IMR-90 (cell line): ENCODE measurements at regions of chr14 and their contacts with region 1.

Region 1: GRCh38 chr14:91177073-91178034 is 63.5 kb downstream of the DGLUCY start:
- DNase-seq: peak; percentile 70
- ATAC-seq: peak; percentile 88
- H3K4me3 ChIP-seq: no peak overlapping the region
- H3K27ac ChIP-seq: no peak overlapping the region
- H3K4me1 ChIP-seq: no peaks in the 10 kb centered on the region
- H3K27me3 ChIP-seq: no peaks in the 10 kb centered on the region
- CTCF ChIP-seq: peak; percentile 83
- POLR2A ChIP-seq: no peak
- RAD21 ChIP-seq: peak; percentile 87

Region 2: DNA sequence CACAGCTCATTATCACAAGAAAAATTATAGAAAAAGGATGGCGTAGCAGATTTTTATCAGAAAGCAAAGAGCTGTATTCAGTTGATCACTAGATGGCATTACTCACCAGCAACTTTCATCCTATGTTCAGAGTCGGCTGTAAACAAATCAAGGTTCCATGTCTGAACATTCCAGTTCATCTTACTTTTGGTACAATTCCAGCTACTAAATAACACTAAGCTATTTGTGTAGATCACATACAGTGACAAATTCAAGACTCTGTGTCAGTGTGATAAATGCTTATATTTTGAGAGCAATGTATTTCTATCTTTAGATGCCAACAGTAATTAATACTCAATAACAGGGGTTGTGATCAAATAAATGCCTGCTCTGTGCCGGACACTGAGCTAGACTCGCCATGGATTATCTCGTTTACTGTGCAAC is 875.7 kb before region 1 on chr14:
- CTCF ChIA-PET with region 1: no interaction called
- POLR2A ChIA-PET with region 1: no interaction called
- dilution Hi-C with region 1: no loop called
- in situ Hi-C with region 1: loop called (anchors 25 kb)
- intact Hi-C with region 1: loop called (anchors 10 kb)
- DNase-seq: peak; percentile 80
- ATAC-seq: peak; percentile 91
- H3K4me3 ChIP-seq: no peak overlapping the region
- H3K27ac ChIP-seq: no peak overlapping the region
- H3K4me1 ChIP-seq: peaks cover under 1% of the 10 kb centered on the region; the same call in 1 of the 2 replicates
- H3K27me3 ChIP-seq: no peaks in the 10 kb centered on the region
- CTCF ChIP-seq: peak; percentile 79
- POLR2A ChIP-seq: no peak
- RAD21 ChIP-seq: peak; percentile 86

Region 3: DNA sequence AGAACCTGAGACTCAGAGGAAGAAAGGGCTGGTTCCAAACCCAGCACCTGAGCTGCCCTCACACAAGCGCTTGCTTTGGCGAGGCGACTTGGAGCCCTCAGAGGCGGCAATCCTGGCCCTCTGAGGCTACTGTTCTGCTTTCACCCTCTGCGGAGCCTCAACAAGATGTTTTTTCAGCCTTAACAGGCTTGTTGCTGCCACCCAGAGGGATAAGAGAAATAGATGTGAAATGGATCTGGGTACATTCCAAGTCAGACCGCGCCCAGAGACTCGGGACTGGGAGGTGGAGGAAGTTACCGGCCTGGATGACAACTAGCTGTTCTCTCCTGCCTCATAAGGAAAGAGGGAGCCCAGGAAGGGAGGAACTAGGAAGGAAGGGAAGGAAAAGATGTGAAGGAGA is 450.7 kb before region 1 on chr14:
- CTCF ChIA-PET with region 1: no interaction called
- POLR2A ChIA-PET with region 1: no interaction called
- dilution Hi-C with region 1: no loop called
- in situ Hi-C with region 1: no loop called
- intact Hi-C with region 1: loop called (anchors 10 kb)
- DNase-seq: peak; percentile 37
- ATAC-seq: peak; percentile 73
- H3K4me3 ChIP-seq: no peak overlapping the region
- H3K27ac ChIP-seq: no peak overlapping the region
- H3K4me1 ChIP-seq: no peaks in the 10 kb centered on the region
- H3K27me3 ChIP-seq: no peaks in the 10 kb centered on the region
- CTCF ChIP-seq: 0 out of 2 replicates have a peak, but pooled peaks have one; percentile 21
- POLR2A ChIP-seq: no peak
- RAD21 ChIP-seq: peak; percentile 17; the same call in 1 of the 2 replicates

Region 4: DNA sequence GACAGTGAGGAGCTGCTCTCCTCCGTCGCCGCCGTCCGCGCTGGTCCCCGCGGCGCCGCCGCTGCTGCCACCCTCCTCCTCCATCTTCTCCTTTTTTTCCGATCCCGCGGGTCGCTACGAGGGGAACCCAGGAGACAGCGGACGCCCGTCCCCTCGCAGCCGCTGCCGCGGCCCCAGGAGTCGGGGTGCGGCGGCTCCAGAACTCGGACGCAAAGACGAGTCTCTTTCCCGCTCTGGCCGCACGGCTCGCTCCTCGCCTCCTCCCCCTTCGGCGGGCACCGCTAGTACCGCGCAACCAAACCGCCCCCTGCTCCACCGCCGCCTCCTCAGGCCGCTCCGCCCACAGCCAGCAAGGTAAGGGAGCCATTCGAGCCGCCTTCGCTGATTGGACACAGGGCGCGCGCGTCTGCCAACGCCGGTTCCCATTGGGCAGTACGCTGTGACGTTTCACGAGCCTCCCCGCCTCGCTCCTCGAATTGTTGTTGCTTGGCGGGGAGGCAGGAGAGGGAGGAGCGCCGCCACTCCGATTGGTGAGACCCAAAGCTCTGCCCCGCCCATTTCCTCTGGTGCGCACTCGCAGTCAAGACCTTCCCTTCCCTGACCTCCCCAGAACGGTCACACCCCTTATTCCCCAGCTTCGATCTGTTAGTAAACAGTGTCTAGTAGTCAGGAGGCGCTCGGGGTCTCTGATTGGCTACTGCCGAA is 116.9 kb before region 1 on chr14 and contains the start of gene RPS6KA5:
- CTCF ChIA-PET with region 1: interaction called, 7 read pairs
- POLR2A ChIA-PET with region 1: no interaction called
- dilution Hi-C with region 1: no loop called
- in situ Hi-C with region 1: no loop called
- intact Hi-C with region 1: loop called (anchors 1 kb)
- DNase-seq: peak; percentile 100
- ATAC-seq: peak; percentile 95
- H3K4me3 ChIP-seq: peak within 1 kb of the TSS; percentile 68
- H3K27ac ChIP-seq: peak within 1 kb of the TSS; percentile 2; the same call in 1 of the 2 replicates
- H3K4me1 ChIP-seq: no peaks in the 10 kb centered on the region
- H3K27me3 ChIP-seq: no peaks in the 10 kb centered on the region
- CTCF ChIP-seq: no peak
- POLR2A ChIP-seq: peak; percentile 62; the same call in 1 of the 2 replicates
- RAD21 ChIP-seq: no peak
- total RNA-seq, gene RPS6KA5: 0.28 and 0.36 TPM in 2 replicates

Region 5: DNA sequence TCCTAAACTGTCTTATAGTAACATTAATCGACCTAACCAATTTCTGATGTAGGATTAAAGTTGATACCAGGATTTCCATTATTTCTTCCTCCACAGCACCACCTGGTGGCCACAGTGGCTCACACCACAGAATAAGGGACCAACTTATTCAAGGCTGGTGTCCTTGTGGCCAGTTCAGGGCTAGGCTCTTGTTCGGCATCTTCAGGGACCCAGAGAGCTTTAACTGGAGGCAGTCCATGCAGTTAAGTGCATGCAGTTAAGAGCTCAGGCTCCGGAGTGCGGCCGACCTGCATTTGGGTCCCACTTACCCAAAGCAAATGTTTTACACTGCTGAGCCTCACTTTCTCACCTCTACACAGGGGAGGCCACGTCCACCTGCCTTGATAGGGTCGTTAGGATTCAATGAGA is 109.2 kb after region 1 on chr14:
- CTCF ChIA-PET with region 1: interaction called, 41 read pairs
- POLR2A ChIA-PET with region 1: no interaction called
- dilution Hi-C with region 1: no loop called
- in situ Hi-C with region 1: loop called (anchors 5 kb)
- intact Hi-C with region 1: loop called (anchors 1 kb)
- DNase-seq: peak; percentile 62
- ATAC-seq: peak; percentile 82
- H3K4me3 ChIP-seq: no peak overlapping the region
- H3K27ac ChIP-seq: no peak overlapping the region
- H3K4me1 ChIP-seq: peaks cover 2% of the 10 kb centered on the region; the same call in 1 of the 2 replicates
- H3K27me3 ChIP-seq: no peaks in the 10 kb centered on the region; the same call in 1 of the 2 replicates
- CTCF ChIP-seq: peak; percentile 93
- POLR2A ChIP-seq: no peak
- RAD21 ChIP-seq: peak; percentile 84